BJ (cell line): ENCODE measurements at regions of chr11 and their contacts with region 1.

Region 1: DNA sequence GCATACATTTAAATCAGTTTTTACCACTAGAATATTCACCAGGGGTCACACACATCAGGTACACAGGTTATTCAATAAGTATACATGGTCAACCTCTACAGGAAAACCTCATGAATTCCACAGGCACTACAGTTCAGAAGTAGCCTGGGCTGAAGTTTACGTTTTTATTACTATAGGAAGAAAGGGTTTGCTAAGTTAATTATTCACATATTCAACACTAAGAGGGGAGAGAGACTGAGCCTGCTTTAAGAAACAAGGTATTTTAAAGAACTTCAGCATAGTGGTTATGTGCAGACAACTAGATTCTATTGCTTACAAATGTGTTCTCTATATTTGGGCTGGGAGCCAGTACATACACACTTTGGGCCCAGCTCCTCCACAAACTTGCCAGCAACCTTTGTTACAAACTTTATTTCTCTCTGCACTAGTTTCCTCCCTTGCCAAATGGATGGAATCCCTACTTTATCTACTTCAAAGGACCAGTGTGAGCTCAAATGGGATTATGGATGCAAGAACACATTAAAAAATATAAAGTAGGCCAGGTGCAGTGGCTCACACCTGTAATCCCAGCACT is 31.9 kb downstream of the IL18BP start:
- DNase-seq: no peak
- H3K4me3 ChIP-seq: no peak overlapping the region
- H3K27me3 ChIP-seq: no peaks in the 10 kb centered on the region
- CTCF ChIP-seq: no peak

Region 2: GRCh38 chr11:72015511-72016171 is 14.9 kb before region 1 on chr11:
- CTCF ChIA-PET with region 1: interaction called, 47 read pairs
- POLR2A ChIA-PET with region 1: no interaction called
- DNase-seq: no peak
- H3K4me3 ChIP-seq: no peak overlapping the region
- H3K27me3 ChIP-seq: no peaks in the 10 kb centered on the region
- CTCF ChIP-seq: peak; percentile 55

Region 3: DNA sequence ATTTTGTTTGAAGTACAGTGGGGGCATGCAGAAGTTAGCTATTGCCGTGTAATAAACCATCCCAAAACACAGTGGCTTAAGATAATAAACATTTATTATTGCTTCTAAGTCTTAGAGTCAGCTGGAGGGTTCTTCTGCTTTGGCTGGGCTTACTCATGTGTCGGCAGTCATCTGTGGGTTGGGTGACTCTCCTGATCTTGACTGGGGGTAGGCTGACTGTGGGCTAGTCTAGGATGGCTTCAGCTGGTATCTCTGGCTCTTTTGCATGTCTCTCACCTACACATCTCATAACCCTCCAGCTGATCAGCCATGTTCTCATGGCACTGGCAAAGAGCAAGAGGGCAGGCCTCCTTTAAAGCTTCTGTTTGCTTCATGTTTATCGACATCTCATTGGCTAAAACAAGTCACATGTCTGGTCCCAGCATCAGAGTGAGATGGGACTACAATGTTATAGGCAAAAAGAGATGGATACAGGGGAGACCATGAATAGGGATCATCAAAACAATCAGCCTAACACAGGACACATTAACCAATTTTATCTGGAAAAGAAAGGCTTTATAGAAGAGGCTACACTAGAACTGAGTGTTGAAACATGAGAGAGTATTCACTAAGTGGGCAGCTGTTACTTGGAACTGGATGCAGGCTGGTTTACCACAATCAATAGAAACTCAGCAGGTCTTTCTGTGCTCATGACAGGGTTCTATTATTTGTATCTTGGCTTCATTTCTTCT is 55.2 kb after region 1 on chr11:
- CTCF ChIA-PET with region 1: interaction called, 209 read pairs
- POLR2A ChIA-PET with region 1: no interaction called
- DNase-seq: no peak
- H3K4me3 ChIP-seq: no peak overlapping the region
- H3K27me3 ChIP-seq: no peaks in the 10 kb centered on the region
- CTCF ChIP-seq: no peak

Region 4: DNA sequence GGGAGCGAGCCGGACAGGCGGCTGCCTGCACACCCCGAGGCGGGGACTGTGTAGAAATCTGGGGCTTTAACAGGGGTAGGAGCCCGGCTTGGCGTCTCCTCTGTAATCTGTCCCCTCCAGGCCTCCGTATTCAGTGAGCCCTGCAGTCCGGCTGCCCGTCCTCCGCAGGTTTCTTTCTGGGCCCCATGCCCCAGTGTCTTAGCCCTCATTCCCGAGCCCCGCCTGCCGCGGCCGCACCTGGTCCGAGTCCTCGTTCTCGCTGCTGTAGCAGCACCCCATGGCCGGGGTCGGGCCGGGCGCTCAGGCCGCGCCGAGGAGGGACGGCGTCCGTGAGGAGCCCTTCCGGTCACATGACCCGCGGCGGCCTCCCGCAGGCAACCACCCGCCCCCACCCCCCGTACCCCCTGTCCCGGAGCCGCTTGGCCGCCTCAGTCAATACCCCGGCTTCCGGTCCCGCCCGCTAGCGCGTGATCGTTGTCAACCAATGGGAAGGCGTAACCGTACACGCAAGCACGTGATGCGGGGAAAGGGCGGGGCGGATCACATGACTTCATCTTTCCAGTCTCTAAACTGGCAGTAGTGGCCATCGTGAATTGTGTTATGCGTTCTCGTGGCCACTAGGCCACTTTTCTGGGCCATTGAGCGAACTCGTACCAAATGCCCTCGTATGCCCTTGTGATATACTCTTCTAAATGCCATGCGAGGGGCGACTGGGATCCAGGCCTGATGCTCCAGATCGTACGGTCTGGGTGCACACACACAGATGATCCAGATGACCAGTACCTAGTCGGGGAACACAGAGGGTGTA is 72.6 kb after region 1 on chr11 and contains the start of gene LAMTOR1:
- CTCF ChIA-PET with region 1: interaction called, 43 read pairs
- POLR2A ChIA-PET with region 1: no interaction called
- DNase-seq: peak; percentile 92
- H3K4me3 ChIP-seq: peak within 1 kb of the TSS; percentile 65
- H3K27me3 ChIP-seq: no peaks in the 10 kb centered on the region
- CTCF ChIP-seq: peak; percentile 52
- polyA plus RNA-seq, gene LAMTOR1: 105 and 145 TPM in 2 replicates

Region 5: GRCh38 chr11:72179804-72180396 is 149.3 kb after region 1 on chr11:
- CTCF ChIA-PET with region 1: interaction called, 79 read pairs
- POLR2A ChIA-PET with region 1: no interaction called
- DNase-seq: no peak
- H3K4me3 ChIP-seq: no peak overlapping the region
- H3K27me3 ChIP-seq: no peaks in the 10 kb centered on the region
- CTCF ChIP-seq: no peak